ENCODE measurements at regions of chr19 and their contacts with region 1.

Region 1: DNA sequence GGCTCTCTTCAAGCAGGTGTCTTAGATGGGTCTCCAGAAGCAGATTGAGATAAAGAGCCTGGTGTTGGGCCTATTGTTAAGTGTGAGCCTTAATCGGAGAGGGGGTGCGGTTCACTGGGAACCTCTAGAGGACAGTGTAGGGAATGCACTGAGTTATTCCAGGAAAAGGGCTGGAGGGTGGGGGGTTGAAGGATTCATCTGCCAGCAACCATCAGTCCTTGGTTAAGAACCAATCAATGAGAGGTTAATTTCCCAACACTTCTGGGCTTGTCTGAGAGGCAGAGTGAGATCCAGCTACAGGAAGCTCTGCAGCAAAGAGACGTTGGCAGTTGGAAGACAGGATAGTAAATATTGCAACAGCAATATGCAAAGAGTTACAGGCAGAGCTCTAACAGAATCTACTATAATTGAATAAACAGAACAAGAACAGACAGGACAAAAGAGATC is 28.7 kb downstream of the CYP4F2 start:
- DNase-seq: peak in 1 of 2 donors; percentile 26
- H3K4me3 ChIP-seq: no peak overlapping the region
- H3K27ac ChIP-seq: peak overlapping the region; percentile 42 to 61
- H3K4me1 ChIP-seq: no peaks in the 10 kb centered on the region
- H3K27me3 ChIP-seq: no peaks in the 10 kb centered on the region
- CTCF ChIP-seq: peak; percentile 53 to 76 (median 69)
- POLR2A ChIP-seq: no peak

Region 2: DNA sequence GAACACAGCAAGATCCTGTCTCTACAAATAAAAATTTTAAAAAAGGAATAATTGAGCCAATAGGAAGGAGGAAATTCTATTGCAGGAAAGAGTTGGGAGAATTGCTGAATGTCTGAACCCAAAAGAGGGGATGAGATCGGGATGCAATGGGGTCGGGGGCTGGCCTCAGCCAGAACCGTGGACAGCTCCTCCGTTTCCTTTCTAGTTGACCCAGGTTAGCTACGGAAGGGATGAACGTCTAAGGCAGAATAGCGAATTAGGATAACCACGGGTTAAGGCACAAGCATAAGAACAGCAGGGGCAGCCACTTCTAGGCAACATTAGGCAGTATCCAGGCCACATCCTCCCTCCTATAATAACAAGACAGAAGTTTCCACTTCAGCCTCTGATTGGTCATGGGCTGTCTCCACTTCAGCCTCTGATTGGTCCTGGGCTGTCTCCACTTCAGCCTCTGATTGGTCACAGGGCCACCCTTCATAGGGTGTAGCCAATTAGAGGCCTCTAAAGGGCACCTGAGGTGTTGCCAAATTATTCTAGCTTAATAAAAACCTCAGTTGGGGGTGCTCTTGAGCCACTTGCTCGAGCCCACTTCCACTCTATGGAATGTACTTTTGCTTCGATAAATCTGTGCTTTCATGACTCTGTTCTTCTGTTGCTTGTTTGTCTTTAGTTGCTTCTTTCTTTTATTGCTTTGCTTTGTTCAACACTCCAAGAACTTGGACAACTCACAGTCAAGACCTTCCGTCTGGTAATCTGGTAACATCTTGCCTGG is 182.3 kb after region 1 on chr19:
- intact Hi-C with region 1: loop called (anchors 5 kb)
- DNase-seq: no peak
- H3K4me3 ChIP-seq: no peak overlapping the region
- H3K27ac ChIP-seq: no peak overlapping the region
- H3K4me1 ChIP-seq: no peaks in the 10 kb centered on the region
- H3K27me3 ChIP-seq: no peaks in the 10 kb centered on the region
- CTCF ChIP-seq: no peak
- POLR2A ChIP-seq: no peak

Measured in breast epithelium (tissue), 4 donors.